ENCODE measurements at regions of chr13 and their contacts with region 1.

Region 1: GRCh38 chr13:26707122-26708006 is 53.2 kb downstream of the GPR12 start:
- DNase-seq: no peak
- H3K4me3 ChIP-seq: no peak overlapping the region
- H3K27ac ChIP-seq: no peak overlapping the region
- H3K4me1 ChIP-seq: no peaks in the 10 kb centered on the region
- H3K27me3 ChIP-seq: no peaks in the 10 kb centered on the region
- CTCF ChIP-seq: peak; percentile 17

Region 2: DNA sequence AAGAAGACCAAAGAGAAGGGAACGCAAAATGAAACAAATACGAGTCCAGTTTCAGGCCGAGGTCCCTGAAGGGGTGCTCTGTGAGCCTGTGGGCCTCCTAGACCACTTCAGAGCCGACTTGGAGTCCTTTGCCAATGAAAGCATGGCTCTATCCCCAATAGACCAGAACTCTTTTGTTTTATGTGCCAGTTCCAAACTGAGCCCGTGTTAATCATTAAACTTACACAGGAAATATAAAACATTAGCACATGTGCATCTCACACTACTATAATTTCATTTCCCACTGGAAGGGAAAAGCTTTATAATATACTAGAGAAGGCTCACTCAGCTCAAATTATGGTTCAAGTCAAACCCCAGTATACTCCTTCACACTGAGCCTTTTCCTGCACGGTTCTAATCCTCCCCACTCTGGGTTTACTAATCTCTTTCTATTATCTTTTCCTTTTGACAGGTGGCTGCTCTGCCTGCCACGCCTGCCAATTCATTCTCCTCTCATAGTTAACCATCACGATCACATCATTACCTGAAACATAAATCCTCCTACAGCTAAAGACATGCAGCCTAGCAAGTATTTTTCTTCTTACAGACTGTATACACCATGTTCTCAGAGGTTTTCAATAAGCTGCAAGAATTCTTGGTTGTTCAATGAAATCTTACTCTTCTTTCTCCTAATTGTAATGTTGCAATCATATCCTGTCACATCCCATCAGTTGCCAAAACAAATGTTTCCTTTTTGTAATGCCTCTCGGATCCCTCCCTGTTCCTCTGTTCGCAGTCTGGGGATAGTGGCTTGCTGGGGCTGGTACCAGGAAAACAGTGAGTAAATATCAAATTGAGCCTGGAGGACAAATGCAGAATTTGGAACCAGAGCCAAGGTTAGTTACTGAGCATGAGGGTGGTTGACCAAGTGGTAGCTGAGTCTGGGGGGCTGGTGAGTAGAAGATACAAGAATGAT is 168.7 kb before region 1 on chr13:
- intact Hi-C with region 1: no loop called
- DNase-seq: peak; percentile 33
- H3K4me3 ChIP-seq: no peak overlapping the region
- H3K27ac ChIP-seq: no peak overlapping the region
- H3K4me1 ChIP-seq: peaks cover 6% of the 10 kb centered on the region
- H3K27me3 ChIP-seq: no peaks in the 10 kb centered on the region
- CTCF ChIP-seq: no peak

Region 3: GRCh38 chr13:26656919-26657318 is 50.4 kb before region 1 on chr13:
- intact Hi-C with region 1: no loop called
- DNase-seq: no peak
- H3K4me3 ChIP-seq: no peak overlapping the region
- H3K27ac ChIP-seq: no peak overlapping the region
- H3K4me1 ChIP-seq: no peaks in the 10 kb centered on the region
- H3K27me3 ChIP-seq: no peaks in the 10 kb centered on the region
- CTCF ChIP-seq: no peak

Region 4: GRCh38 chr13:26872525-26873385 is 165.4 kb after region 1 on chr13:
- intact Hi-C with region 1: loop called (anchors 5 kb)
- DNase-seq: peak; percentile 58
- H3K4me3 ChIP-seq: no peak overlapping the region
- H3K27ac ChIP-seq: no peak overlapping the region
- H3K4me1 ChIP-seq: no peaks in the 10 kb centered on the region
- H3K27me3 ChIP-seq: no peaks in the 10 kb centered on the region
- CTCF ChIP-seq: peak; percentile 58

Region 5: GRCh38 chr13:26929971-26930730 is 222.8 kb after region 1 on chr13:
- intact Hi-C with region 1: loop called (anchors 5 kb)
- DNase-seq: peak; percentile 73
- H3K4me3 ChIP-seq: no peak overlapping the region
- H3K27ac ChIP-seq: no peak overlapping the region
- H3K4me1 ChIP-seq: no peaks in the 10 kb centered on the region
- H3K27me3 ChIP-seq: no peaks in the 10 kb centered on the region
- CTCF ChIP-seq: peak; percentile 97

Measured in colonic mucosa (tissue), 4 donors.